ENCODE measurements at regions of chr6 and their contacts with region 1.

Region 1: DNA sequence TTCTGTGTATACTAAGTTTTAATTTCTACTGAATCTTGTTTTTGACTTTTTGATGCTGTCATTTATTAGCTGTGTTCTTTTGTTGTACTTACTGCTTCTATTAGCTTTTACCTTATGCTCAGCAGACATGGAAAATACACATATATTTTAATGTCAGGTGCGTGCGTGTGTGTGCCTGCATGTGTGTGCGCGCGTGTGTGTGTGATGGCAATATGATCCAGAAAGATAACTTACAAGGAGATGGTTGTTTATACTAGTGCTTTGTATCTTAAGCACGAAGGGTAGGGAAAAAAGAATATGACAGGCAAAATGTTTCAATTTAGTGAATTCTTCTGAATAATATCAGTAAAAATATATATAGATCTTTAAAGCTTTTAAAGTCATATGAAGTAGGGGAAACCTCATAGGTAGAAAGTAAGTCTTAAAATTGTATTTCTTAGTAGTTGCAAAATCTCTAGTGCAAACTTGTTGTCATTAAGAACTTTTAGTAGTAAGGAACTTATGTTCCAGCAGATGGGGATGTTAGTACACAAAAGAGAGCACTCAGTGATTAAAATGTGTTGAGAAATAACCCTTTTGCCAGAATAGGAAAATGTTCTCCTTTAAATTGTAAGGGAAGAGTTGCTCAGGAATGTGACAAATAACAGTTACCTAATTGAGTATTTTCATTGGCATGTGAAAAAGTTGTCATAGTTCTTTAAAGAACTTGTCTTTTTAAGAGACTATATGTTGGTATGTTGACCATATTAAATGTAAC is 13.2 kb downstream of the QKI start:
- DNase-seq: no peak

Region 2: GRCh38 chr6:163338671-163339405 is 88.8 kb before region 1 on chr6:
- intact Hi-C with region 1: no loop called
- DNase-seq: no peak

Region 3: DNA sequence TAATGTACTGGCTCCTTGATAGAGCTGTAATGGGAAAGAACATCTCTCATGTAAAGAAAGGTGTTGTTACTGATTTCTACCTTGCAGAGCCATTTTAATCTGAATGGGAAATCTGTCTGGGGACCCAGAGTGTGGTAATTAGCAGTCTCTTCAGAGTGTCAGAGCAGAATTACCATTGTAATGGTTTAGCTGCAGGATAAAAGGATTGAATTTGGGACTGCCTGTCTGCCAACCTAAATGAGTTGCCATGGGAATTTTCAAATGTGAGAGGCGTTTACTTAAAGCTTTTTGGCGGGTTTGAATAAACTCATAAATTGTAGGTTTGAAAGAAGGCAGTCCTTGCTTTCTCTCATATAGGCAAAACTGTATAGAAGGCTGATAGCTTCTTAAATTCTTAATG is 115.6 kb after region 1 on chr6:
- intact Hi-C with region 1: loop called in 1 of 2 experiments (anchors 10 kb)
- DNase-seq: no peak

Region 4: DNA sequence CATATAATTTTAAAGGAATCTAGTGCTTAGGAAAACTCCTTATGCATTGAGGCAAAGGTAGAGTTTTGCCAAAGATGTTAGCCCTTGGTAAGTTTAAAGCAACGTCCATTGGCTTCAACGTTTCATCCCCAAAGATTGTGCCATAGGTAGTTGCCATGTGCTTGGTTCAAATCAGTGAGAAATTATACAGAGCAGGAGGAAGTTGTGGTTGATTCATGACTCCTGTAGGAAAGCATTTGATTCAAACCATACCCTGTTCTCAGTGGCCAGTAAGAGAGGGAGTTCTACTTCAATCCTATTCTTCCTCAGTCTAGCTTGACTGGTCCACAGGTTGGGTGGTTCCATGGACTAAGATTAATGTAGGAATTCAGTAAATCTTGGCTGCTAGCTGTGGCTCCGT is 522.5 kb after region 1 on chr6:
- intact Hi-C with region 1: loop called (anchors 5 to 10 kb)
- DNase-seq: no peak

Region 5: GRCh38 chr6:163956571-163957407 is 529.1 kb after region 1 on chr6:
- intact Hi-C with region 1: loop called (anchors 5 to 10 kb)
- DNase-seq: peak; percentile 92

Measured in posterior vena cava (tissue), 2 donors.